ENCODE measurements at regions of chr7 and their contacts with region 1.

Region 1: DNA sequence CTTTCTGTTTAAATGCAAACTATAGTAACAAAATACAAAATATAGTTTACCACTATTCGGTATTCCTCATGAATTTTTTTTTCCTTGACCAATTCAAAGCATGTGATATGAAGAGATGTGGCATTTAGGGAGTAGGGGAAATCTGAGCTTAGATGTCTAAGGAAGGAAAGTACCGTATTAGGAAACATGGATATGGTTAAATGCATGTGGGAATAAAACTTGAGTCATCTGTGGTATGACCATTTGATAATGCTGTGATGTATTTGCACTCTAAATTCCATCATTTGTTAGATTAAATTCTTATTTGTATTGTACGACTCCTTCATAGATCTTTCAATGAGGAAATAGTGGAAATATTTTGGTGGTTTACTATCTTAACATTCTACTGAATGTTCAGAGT is 19.7 kb downstream of the AHR start:
- DNase-seq: no peak
- ATAC-seq: no peak
- H3K4me3 ChIP-seq: no peak overlapping the region
- H3K27ac ChIP-seq: no peak overlapping the region
- H3K4me1 ChIP-seq: no peaks in the 10 kb centered on the region
- H3K27me3 ChIP-seq: no peaks in the 10 kb centered on the region

Region 2: DNA sequence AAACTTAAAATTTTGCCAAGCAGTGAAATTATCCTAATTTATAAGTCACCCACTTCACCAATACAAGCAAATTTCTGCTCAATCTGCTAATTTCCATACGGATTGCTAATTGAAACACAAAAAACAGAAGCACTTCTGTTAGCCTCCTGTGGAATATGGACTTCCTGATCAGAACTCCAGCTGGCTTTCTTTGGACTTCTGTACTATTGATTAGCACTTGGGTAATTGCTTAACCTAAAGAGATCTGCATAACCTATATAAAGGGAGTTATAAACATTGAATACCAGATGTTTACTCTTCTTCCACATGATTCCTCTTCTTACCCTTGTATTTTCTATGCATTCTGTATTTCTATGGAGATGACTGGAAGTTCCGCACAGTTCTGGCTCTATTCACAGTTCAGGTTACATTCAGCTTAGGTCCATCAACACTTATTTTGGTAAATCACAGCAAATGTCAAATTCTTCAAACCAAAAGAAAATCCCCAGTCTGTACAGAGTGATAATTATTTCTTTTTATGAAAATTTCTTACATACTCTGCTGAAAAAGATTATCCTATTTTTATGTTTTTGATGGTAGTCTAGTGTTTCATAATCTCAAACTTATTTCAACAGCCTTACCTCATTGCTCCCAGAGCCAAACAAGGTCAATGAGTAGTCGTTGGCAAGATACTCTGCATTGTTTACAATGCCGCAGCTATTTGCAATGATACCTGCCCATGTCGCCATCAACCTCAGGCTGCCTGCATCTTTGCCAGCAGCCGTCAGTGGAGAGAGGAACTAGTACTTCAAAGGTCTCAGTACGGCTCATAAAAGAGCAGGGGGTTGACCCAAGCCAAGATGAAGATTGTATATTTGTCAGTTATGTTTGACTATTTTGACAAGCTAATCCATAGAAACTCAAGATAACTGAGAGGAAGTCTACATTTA is 205.9 kb after region 1 on chr7:
- intact Hi-C with region 1: loop called in 1 of 4 experiments (anchors 10 kb)
- DNase-seq: peak in 1 of 3 donors; percentile 44
- ATAC-seq: peak in 1 of 2 donors; percentile 41
- H3K4me3 ChIP-seq: no peak overlapping the region
- H3K27ac ChIP-seq: no peak overlapping the region
- H3K4me1 ChIP-seq: peaks cover 2% of the 10 kb centered on the region
- H3K27me3 ChIP-seq: no peaks in the 10 kb centered on the region